ENCODE measurements at regions of chr17 and their contacts with region 1.

Region 1: DNA sequence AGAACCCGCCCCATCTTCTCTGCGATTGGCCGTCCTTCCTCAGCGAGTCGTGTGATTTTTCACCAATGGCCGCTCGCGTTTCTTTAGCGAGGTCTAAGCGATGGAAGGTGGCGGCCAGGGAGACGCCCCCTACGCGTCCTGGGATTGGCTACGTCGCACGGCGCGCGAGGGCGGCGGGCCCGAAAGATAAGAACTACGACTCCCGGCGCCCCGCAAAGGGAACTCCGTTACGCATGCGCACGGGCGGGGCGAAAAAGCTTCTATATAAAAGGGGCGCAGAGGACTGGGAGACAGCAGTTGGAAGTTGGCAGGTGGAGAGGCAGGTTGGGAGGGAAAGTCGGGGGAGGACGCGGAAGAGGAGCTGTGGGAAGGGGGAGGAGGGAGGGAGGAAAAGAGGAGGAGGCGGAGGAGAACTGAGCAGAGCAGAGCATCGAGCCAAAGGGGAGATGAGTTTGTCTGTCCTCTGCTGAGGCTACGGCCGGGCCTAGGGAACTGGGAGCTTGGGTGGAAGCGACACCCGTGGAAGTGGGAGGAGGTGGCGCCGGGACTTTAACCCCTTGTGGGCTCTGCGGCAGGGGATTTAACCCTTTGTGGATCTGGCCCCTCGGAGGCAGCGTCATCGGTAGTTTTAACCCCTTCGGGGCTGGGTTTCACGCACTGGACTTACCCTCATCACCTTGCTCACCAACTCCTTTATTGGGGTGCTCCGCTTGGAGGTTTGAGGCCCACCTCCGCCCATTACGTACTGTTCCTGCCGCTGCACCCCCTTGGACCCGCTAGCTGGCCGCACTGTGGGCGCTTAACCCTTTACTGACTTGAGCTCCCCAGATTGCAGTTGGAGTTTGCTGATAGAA is at the start of gene HEXIM1:
- DNase-seq: peak; percentile 100
- ATAC-seq: peak; percentile 78
- H3K4me3 ChIP-seq: peak within 1 kb of the TSS; percentile 97 to 98 (median 97)
- H3K27ac ChIP-seq: peak within 1 kb of the TSS; percentile 97
- H3K4me1 ChIP-seq: peaks cover 24% of the 10 kb centered on the region
- H3K27me3 ChIP-seq: no peaks in the 10 kb centered on the region; a peak in 2 of 5 replicates
- CTCF ChIP-seq: peak; percentile 28
- EP300 ChIP-seq: peak; percentile 73 to 89
- POLR2A ChIP-seq: peak; percentile 100
- RAD21 ChIP-seq: peak; percentile 84
- total RNA-seq, gene HEXIM1: 10.5 and 14.8 TPM in 2 replicates

Region 2: GRCh38 chr17:45060797-45061605 is 87.4 kb before region 1 on chr17 and contains the start of gene NMT1:
- CTCF ChIA-PET with region 1: no interaction called
- POLR2A ChIA-PET with region 1: interaction called, 23 read pairs
- in situ Hi-C with region 1: no loop called
- intact Hi-C with region 1: no loop called
- DNase-seq: peak; percentile 100
- ATAC-seq: peak; percentile 95
- H3K4me3 ChIP-seq: peak within 1 kb of the TSS; percentile 91 to 99 (median 97)
- H3K27ac ChIP-seq: peak within 1 kb of the TSS; percentile 94
- H3K4me1 ChIP-seq: peaks cover 48% of the 10 kb centered on the region
- H3K27me3 ChIP-seq: no peaks in the 10 kb centered on the region; a peak in 1 of 5 replicates
- CTCF ChIP-seq: peak; percentile 15; the same call in 1 of the 2 replicates
- EP300 ChIP-seq: peak in 1 of 2 experiments; percentile 40; a peak in 2 of 4 replicates
- POLR2A ChIP-seq: peak; percentile 91 to 96
- RAD21 ChIP-seq: no peak; the same call in none of the 2 replicates
- total RNA-seq, gene NMT1: 142 and 194 TPM in 2 replicates

Region 3: DNA sequence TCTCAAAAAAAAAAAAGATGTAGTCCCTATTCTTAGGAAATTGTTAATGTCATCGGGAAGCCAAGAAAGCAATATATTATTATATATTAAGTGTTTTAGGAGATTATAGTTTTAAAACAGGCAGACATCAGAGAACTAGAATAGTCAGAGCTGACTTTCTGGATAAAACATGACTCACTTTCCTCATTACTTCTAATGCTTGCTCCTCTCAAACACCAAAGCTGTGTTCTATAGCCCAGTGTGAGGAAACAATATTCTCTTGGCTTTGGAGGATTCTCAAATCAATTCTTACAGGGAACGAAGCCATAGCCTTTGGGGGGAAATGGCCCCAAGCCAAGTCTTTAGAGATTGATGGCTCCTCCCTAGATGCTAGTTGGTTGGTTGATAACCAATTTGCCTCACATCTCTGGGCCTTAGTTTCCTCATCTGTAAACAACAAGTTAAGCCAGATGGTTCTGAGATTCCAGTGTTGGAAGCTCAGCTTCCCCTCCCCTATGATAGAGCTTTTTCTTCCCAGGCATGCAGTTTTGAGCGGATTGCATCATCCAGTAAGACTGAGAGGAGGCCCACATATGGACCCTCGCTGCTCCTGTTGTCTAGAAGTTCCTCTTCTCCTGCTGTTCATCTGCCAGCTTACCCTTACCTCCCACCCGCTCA is 74.9 kb before region 1 on chr17:
- CTCF ChIA-PET with region 1: no interaction called
- POLR2A ChIA-PET with region 1: no interaction called
- in situ Hi-C with region 1: no loop called
- intact Hi-C with region 1: no loop called
- DNase-seq: no peak
- ATAC-seq: no peak
- H3K4me3 ChIP-seq: no peak overlapping the region
- H3K27ac ChIP-seq: no peak overlapping the region
- H3K4me1 ChIP-seq: peaks cover 8% of the 10 kb centered on the region; the same call in 1 of the 2 replicates
- H3K27me3 ChIP-seq: no peaks in the 10 kb centered on the region
- CTCF ChIP-seq: no peak
- EP300 ChIP-seq: no peak
- POLR2A ChIP-seq: no peak
- RAD21 ChIP-seq: no peak

Region 4: GRCh38 chr17:45161019-45161825 is 12.8 kb after region 1 on chr17:
- CTCF ChIA-PET with region 1: interaction called, 10 read pairs
- POLR2A ChIA-PET with region 1: interaction called, 2,487 read pairs
- in situ Hi-C with region 1: no loop called
- intact Hi-C with region 1: loop called (anchors 1 kb)
- DNase-seq: peak; percentile 100
- ATAC-seq: peak; percentile 75
- H3K4me3 ChIP-seq: peak overlapping the region; percentile 74 to 93 (median 92)
- H3K27ac ChIP-seq: peak overlapping the region; percentile 98
- H3K4me1 ChIP-seq: peaks cover 59% of the 10 kb centered on the region
- H3K27me3 ChIP-seq: no peaks in the 10 kb centered on the region; a peak in 1 of 5 replicates
- CTCF ChIP-seq: no peak
- EP300 ChIP-seq: peak in 1 of 2 experiments; percentile 52; a peak in 3 of 4 replicates
- POLR2A ChIP-seq: peak; percentile 76 to 88
- RAD21 ChIP-seq: peak; percentile 6

Region 5: DNA sequence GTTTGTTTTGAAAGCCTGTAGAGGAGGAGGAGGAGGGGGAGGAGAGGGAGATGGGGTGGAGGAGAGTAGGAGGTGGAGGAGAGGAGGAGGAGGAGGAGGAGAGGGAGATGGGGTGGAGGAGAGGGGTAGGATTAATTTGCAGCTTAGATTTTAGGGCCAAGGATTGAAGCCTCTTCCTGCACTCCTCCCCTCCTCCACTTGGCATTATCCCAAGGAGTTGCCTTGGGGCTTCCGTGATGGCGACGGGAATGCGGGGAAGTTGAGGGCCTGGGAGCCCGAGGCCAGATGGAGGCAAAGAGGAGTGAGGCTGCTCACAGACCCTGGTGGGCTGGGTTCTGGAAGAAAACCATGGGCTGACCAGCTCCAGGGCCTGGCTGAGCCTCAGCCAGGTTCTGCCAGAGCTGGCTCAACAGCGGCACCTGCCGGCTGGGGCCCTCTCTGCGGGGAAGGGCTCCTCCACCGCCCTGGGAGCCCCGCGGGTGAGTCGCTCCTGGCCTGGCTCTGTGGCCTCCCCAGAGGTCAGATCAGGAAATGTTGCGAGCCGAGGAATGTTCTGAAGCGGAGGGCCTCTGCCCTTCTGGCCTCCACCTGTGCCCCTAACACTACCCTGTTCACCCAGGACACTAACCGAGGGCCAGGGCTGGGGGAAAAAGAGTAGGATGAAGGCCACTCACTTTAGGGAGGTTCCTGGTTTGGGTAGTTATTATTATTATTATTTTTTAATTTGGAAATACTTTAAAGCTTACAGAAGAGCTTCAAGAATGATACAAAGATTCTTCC is 49.3 kb after region 1 on chr17:
- CTCF ChIA-PET with region 1: interaction called, 130 read pairs
- POLR2A ChIA-PET with region 1: interaction called, 551 read pairs
- in situ Hi-C with region 1: loop called (anchors 5 kb)
- intact Hi-C with region 1: loop called (anchors 1 kb)
- DNase-seq: peak; percentile 92
- ATAC-seq: peak; percentile 91
- H3K4me3 ChIP-seq: peak overlapping the region; percentile 33 to 63 (median 41); a peak in 5 of 6 replicates
- H3K27ac ChIP-seq: peak overlapping the region; percentile 39
- H3K4me1 ChIP-seq: peaks cover 71% of the 10 kb centered on the region
- H3K27me3 ChIP-seq: no peaks in the 10 kb centered on the region
- CTCF ChIP-seq: peak; percentile 100
- EP300 ChIP-seq: peak; percentile 7 to 69; a peak in 2 of 4 replicates
- POLR2A ChIP-seq: no peak
- RAD21 ChIP-seq: peak; percentile 100

Region 6: GRCh38 chr17:45247429-45248131 is 99.2 kb after region 1 on chr17:
- CTCF ChIA-PET with region 1: no interaction called
- POLR2A ChIA-PET with region 1: interaction called, 17 read pairs
- in situ Hi-C with region 1: loop called (anchors 5 kb)
- intact Hi-C with region 1: no loop called
- DNase-seq: peak; percentile 89
- ATAC-seq: peak; percentile 87
- H3K4me3 ChIP-seq: peak overlapping the region; percentile 80 to 84 (median 84)
- H3K27ac ChIP-seq: no peak overlapping the region
- H3K4me1 ChIP-seq: peaks cover 40% of the 10 kb centered on the region
- H3K27me3 ChIP-seq: peaks cover under 1 to 34% of the 10 kb centered on the region in 2 experiments; a peak in 4 of 5 replicates
- CTCF ChIP-seq: no peak
- EP300 ChIP-seq: no peak
- POLR2A ChIP-seq: peak; percentile 44 to 62; a peak in 3 of 4 replicates
- RAD21 ChIP-seq: 0 out of 2 replicates have a peak, but pooled peaks have one; percentile 7

Region 7: DNA sequence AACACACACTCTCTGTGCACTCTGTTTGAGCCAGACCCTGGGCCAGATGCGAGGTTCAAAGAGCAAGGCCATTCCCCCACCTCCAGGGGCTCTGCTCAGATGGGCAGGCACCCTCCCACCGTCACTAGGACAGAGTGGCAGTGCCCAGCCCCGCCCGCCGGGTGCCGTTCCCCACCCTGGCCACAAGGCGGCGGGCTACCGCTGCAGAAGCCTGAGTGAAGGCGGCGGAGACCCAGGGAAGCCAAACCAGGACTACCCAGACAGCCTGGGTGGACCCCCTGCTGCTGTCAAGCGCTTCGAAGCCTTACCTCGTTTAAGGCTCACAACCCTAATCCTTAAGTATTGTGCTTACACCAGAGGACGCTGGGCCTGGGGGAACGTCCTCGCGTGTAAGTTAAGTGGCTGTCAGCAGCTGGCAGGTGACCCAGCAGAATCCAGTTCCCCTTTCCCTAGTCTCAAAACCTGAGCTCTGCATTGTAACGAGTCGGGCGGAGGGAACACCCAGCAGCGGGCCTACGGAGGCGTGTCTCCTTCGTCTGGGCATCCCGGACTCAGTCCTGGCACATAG is 279.7 kb after region 1 on chr17:
- CTCF ChIA-PET with region 1: no interaction called
- POLR2A ChIA-PET with region 1: interaction called, 14 read pairs
- in situ Hi-C with region 1: no loop called
- intact Hi-C with region 1: no loop called
- DNase-seq: peak; percentile 67
- ATAC-seq: peak; percentile 33
- H3K4me3 ChIP-seq: peak overlapping the region; percentile 18 to 66 (median 48)
- H3K27ac ChIP-seq: no peak overlapping the region
- H3K4me1 ChIP-seq: peaks cover 72% of the 10 kb centered on the region
- H3K27me3 ChIP-seq: peaks cover 2 to 42% of the 10 kb centered on the region in 2 experiments; a peak in 4 of 5 replicates
- CTCF ChIP-seq: peak; percentile 100
- EP300 ChIP-seq: no peak
- POLR2A ChIP-seq: no peak
- RAD21 ChIP-seq: peak; percentile 89